Naive thymus-derived CD4-positive, alpha-beta T cell (primary cell): ENCODE measurements at regions of chrX and their contacts with region 1.

Region 1: DNA sequence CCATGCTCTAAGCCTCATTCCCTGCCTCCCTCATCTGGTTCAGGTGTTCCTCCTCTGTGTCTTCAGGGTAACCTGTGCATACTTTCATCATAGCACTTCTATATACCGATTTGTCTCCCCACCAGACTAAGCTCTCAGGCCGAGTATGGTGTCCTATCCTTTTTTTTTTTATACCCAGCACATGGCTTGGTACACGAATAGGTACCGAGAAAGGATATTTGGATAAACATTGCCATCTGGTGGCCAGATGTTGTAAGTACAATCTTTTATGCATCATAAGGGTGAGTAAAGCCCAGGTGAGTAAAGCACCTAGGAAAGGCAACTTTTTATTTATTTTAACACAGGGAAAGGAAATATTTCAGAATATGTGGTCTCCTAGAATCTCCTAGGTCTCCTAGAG is 68.4 kb downstream of the MID2 start:
- DNase-seq: peak in 7 of 9 donors; percentile 30 to 68 (median 61)
- ATAC-seq: peak; percentile 72
- H3K4me3 ChIP-seq: no peak overlapping the region
- H3K4me3 Mint-ChIP-seq: no peak overlapping the region
- H3K27ac ChIP-seq: no peak overlapping the region
- H3K27ac Mint-ChIP-seq: peak overlapping the region in 3 of 9 donors; percentile 20 to 90 (median 52)
- H3K4me1 ChIP-seq: no peaks in the 10 kb centered on the region
- H3K4me1 Mint-ChIP-seq: peaks cover 0 to 8% (median 0%) of the 10 kb centered on the region in 7 donors
- H3K27me3 ChIP-seq: no peaks in the 10 kb centered on the region
- H3K27me3 Mint-ChIP-seq: no peaks in the 10 kb centered on the region

Region 2: DNA sequence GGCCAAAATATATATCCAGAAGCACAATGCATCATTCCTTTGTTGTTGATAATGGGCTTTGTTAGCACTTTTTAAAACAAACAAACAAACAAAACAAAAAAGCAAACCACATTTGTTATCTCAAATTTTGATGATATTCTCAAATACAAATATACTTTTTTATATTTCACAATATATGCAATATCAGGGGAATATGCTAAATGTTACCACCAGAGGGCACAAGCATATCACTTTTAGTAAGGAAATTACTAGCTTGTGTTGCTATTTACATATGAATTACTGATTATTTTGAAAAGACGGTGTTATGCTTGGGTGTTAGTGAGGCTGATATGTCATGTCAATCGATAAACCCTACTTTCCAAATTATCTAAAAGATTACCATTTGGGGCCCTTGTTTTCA is 1020.0 kb before region 1 on chrX:
- CTCF ChIA-PET with region 1: no interaction called
- POLR2A ChIA-PET with region 1: no interaction called
- intact Hi-C with region 1: loop called (anchors 1 kb)
- DNase-seq: peak in 4 of 9 donors; percentile 14 to 22 (median 21)
- ATAC-seq: no peak
- H3K4me3 ChIP-seq: no peak overlapping the region
- H3K4me3 Mint-ChIP-seq: no peak overlapping the region
- H3K27ac ChIP-seq: no peak overlapping the region
- H3K27ac Mint-ChIP-seq: no peak overlapping the region
- H3K4me1 ChIP-seq: no peaks in the 10 kb centered on the region
- H3K4me1 Mint-ChIP-seq: no peaks in the 10 kb centered on the region
- H3K27me3 ChIP-seq: no peaks in the 10 kb centered on the region
- H3K27me3 Mint-ChIP-seq: peaks cover 0 to 9% (median 3%) of the 10 kb centered on the region in 5 donors

Region 3: GRCh38 chrX:107654872-107655761 is 238.9 kb before region 1 on chrX:
- CTCF ChIA-PET with region 1: interaction called, 3 read pairs
- POLR2A ChIA-PET with region 1: no interaction called
- intact Hi-C with region 1: loop called (anchors 1 to 2 kb)
- DNase-seq: peak; percentile 49 to 76 (median 60)
- ATAC-seq: peak; percentile 94
- H3K4me3 ChIP-seq: no peak overlapping the region
- H3K4me3 Mint-ChIP-seq: no peak overlapping the region
- H3K27ac ChIP-seq: no peak overlapping the region
- H3K27ac Mint-ChIP-seq: peak overlapping the region in 7 of 9 donors; percentile 1 to 89 (median 72)
- H3K4me1 ChIP-seq: peaks cover 0 to 6% of the 10 kb centered on the region in 2 donors
- H3K4me1 Mint-ChIP-seq: peaks cover 6 to 30% (median 18%) of the 10 kb centered on the region in 7 donors
- H3K27me3 ChIP-seq: no peaks in the 10 kb centered on the region
- H3K27me3 Mint-ChIP-seq: no peaks in the 10 kb centered on the region

Region 4: GRCh38 chrX:107968623-107969022 is 74.6 kb after region 1 on chrX:
- CTCF ChIA-PET with region 1: no interaction called
- POLR2A ChIA-PET with region 1: no interaction called
- intact Hi-C with region 1: no loop called
- DNase-seq: no peak
- ATAC-seq: no peak
- H3K4me3 ChIP-seq: no peak overlapping the region
- H3K4me3 Mint-ChIP-seq: no peak overlapping the region
- H3K27ac ChIP-seq: no peak overlapping the region
- H3K27ac Mint-ChIP-seq: no peak overlapping the region
- H3K4me1 ChIP-seq: no peaks in the 10 kb centered on the region
- H3K4me1 Mint-ChIP-seq: no peaks in the 10 kb centered on the region
- H3K27me3 ChIP-seq: no peaks in the 10 kb centered on the region
- H3K27me3 Mint-ChIP-seq: peaks cover 0 to 8% (median 6%) of the 10 kb centered on the region in 5 donors